Activated CD4-positive, alpha-beta T cell treated with anti-CD3 and anti-CD28 coated beads for 36 hours (primary cell): ENCODE measurements at regions of chr7 and their contacts with region 1.

Region 1: GRCh38 chr7:22445140-22445743 is 54.7 kb downstream of the STEAP1B start:
- DNase-seq: peak; percentile 10
- ATAC-seq: no peak
- H3K4me3 Mint-ChIP-seq: no peak overlapping the region
- H3K27ac Mint-ChIP-seq: no peak overlapping the region
- H3K4me1 Mint-ChIP-seq: peaks cover 18% of the 10 kb centered on the region
- H3K27me3 Mint-ChIP-seq: peaks cover 18% of the 10 kb centered on the region

Region 2: GRCh38 chr7:21939136-21939857 is 505.9 kb before region 1 on chr7:
- CTCF ChIA-PET with region 1: no interaction called
- POLR2A ChIA-PET with region 1: no interaction called
- intact Hi-C with region 1: loop called in 1 of 2 experiments (anchors 5 kb)
- DNase-seq: peak; percentile 82
- ATAC-seq: peak; percentile 82
- H3K4me3 Mint-ChIP-seq: peak overlapping the region; percentile 53
- H3K27ac Mint-ChIP-seq: peak overlapping the region; percentile 92
- H3K4me1 Mint-ChIP-seq: peaks cover 74% of the 10 kb centered on the region
- H3K27me3 Mint-ChIP-seq: peaks cover 2% of the 10 kb centered on the region

Region 3: GRCh38 chr7:22390516-22390915 is 54.7 kb before region 1 on chr7:
- CTCF ChIA-PET with region 1: no interaction called
- POLR2A ChIA-PET with region 1: no interaction called
- intact Hi-C with region 1: loop called in 1 of 2 experiments (anchors 2 kb)
- DNase-seq: no peak
- ATAC-seq: no peak
- H3K4me3 Mint-ChIP-seq: no peak overlapping the region
- H3K27ac Mint-ChIP-seq: no peak overlapping the region
- H3K4me1 Mint-ChIP-seq: no peaks in the 10 kb centered on the region
- H3K27me3 Mint-ChIP-seq: no peaks in the 10 kb centered on the region